Naive thymus-derived CD4-positive, alpha-beta T cell (primary cell): ENCODE measurements at regions of chr14 and their contacts with region 1.

Region 1: DNA sequence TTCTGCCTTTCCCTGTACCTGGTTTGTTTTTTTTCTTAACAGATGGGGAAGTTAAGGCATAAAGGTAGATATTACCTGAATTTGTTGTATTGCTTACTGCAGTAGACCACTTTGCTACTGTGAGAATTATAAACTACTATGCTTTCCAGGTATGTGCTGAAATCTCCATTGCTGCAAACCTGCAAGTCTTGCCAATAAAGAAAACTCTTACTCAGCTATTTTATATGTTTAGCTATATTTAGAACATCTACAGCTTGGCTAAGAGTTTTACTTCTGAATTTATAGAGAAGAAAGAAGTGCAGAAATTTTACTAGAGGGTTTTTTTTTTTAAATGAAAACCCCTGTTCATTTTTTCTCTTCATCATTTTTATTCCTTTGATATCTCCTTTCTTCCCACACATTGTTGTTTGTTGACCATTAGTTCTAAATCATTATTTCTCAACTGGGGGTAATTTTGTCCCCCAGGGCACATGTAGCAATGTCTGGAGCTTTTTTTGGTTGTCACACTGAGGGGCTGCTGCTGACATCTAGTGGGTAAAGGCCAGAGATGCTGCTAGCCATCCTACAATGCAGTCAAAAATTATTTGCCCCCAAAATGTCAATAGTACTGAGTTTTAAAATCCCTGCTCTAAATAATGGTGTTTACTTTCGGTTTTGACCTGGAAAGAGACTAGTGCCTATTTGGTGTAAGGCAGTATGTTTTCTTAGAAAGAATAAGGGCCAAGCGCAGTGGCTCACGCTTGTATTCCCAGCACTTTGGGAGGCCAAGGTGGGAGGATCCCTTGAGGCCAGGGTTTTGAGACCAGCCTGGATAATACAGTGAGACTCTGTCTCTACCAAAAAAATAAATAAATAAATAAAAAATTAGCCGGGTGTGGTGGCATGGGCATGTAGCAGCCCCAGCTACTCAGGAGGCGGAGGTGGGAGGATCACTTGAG is 48.6 kb downstream of the PCNX1 start:
- DNase-seq: peak in 7 of 9 donors; percentile 29 to 67 (median 52)
- ATAC-seq: peak; percentile 80
- H3K4me3 ChIP-seq: no peak overlapping the region
- H3K4me3 Mint-ChIP-seq: peak overlapping the region in 2 of 10 donors; percentile 12 to 38
- H3K27ac ChIP-seq: no peak overlapping the region
- H3K27ac Mint-ChIP-seq: peak overlapping the region in 5 of 9 donors; percentile 8 to 85 (median 13)
- H3K4me1 ChIP-seq: peaks cover 18 to 19% of the 10 kb centered on the region in 2 donors
- H3K4me1 Mint-ChIP-seq: peaks cover 25 to 53% (median 40%) of the 10 kb centered on the region in 7 donors
- H3K27me3 ChIP-seq: no peaks in the 10 kb centered on the region
- H3K27me3 Mint-ChIP-seq: no peaks in the 10 kb centered on the region

Region 2: GRCh38 chr14:70873627-70874026 is 82.2 kb before region 1 on chr14:
- CTCF ChIA-PET with region 1: interaction called, 7 read pairs
- POLR2A ChIA-PET with region 1: interaction called, 4 read pairs
- intact Hi-C with region 1: loop called in 1 of 2 experiments (anchors 1 kb)
- DNase-seq: peak in 3 of 9 donors; percentile 19 to 30 (median 30)
- ATAC-seq: peak; percentile 74
- H3K4me3 ChIP-seq: no peak overlapping the region
- H3K4me3 Mint-ChIP-seq: peak overlapping the region in 3 of 10 donors; percentile 2 to 68 (median 33)
- H3K27ac ChIP-seq: no peak overlapping the region
- H3K27ac Mint-ChIP-seq: peak overlapping the region in 6 of 9 donors; percentile 4 to 97 (median 39)
- H3K4me1 ChIP-seq: peaks cover 11 to 16% of the 10 kb centered on the region in 2 donors
- H3K4me1 Mint-ChIP-seq: peaks cover 6 to 25% (median 15%) of the 10 kb centered on the region in 7 donors
- H3K27me3 ChIP-seq: no peaks in the 10 kb centered on the region
- H3K27me3 Mint-ChIP-seq: no peaks in the 10 kb centered on the region

Region 3: DNA sequence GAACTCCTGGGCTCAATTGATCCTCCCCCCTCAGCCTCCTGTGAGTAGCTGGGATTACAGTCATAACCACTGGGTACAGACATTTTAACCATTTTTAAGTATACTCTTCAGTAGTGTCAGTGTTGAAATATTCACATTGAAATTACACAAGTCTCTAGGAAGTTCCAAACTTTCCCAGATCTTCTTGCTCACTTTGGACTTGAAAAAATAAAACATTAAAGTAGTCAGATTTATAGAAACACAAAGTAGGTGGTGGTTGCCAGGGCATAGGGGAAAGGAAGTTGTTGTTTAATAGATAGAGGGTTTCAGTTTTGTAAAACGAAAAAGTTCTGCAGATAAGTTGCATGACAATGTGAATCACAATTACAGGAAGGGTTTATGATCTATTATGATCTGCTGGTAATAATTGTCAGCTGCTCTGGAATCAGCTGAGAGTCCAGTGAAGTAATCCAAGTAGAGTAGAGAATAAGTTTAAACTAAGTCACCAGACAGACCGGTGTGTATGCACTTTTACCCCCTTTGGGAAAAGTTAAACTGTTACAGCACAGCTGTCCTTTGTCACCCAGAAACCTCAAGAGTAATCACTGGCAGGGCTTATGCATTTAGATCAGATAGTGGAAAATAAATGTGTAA is 21.2 kb before region 1 on chr14:
- CTCF ChIA-PET with region 1: interaction called, 6 read pairs
- POLR2A ChIA-PET with region 1: interaction called, 35 read pairs
- intact Hi-C with region 1: loop called in 1 of 2 experiments (anchors 2 kb)
- DNase-seq: peak in 2 of 9 donors; percentile 19 to 32
- ATAC-seq: peak; percentile 70
- H3K4me3 ChIP-seq: peak overlapping the region; percentile 35
- H3K4me3 Mint-ChIP-seq: peak overlapping the region; percentile 12 to 81 (median 75)
- H3K27ac ChIP-seq: peak overlapping the region; percentile 19
- H3K27ac Mint-ChIP-seq: peak overlapping the region; percentile 77 to 93 (median 88)
- H3K4me1 ChIP-seq: peaks cover 29 to 32% of the 10 kb centered on the region in 2 donors
- H3K4me1 Mint-ChIP-seq: peaks cover 45 to 96% (median 87%) of the 10 kb centered on the region in 7 donors
- H3K27me3 ChIP-seq: no peaks in the 10 kb centered on the region
- H3K27me3 Mint-ChIP-seq: no peaks in the 10 kb centered on the region

Region 4: DNA sequence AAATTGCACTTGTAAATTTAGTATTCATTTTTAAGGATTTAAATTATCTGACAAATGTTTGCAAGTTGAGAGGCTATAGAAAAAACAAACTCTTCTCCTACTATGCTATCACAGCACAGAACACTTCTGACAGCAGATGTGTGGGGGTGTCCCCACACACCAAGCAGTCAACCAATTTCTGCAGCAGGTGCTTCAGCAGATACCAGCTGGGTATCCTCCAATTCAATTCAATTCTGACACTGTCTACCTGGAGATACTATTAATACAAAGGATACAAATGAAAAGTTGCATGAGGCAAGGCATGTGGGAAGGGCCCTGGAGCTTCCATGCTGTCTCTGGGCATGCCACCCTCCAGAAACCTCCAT is 13.5 kb before region 1 on chr14:
- CTCF ChIA-PET with region 1: interaction called, 46 read pairs
- POLR2A ChIA-PET with region 1: interaction called, 35 read pairs
- intact Hi-C with region 1: loop called in 1 of 2 experiments (anchors 1 kb)
- DNase-seq: no peak
- ATAC-seq: no peak
- H3K4me3 ChIP-seq: no peak overlapping the region
- H3K4me3 Mint-ChIP-seq: peak overlapping the region in 9 of 10 donors; percentile 33 to 86 (median 58)
- H3K27ac ChIP-seq: peak overlapping the region; percentile 12
- H3K27ac Mint-ChIP-seq: peak overlapping the region; percentile 26 to 99 (median 91)
- H3K4me1 ChIP-seq: peaks cover 17 to 21% of the 10 kb centered on the region in 2 donors
- H3K4me1 Mint-ChIP-seq: peaks cover 47 to 86% (median 82%) of the 10 kb centered on the region in 7 donors
- H3K27me3 ChIP-seq: no peaks in the 10 kb centered on the region
- H3K27me3 Mint-ChIP-seq: no peaks in the 10 kb centered on the region